PC-3 (cell line): ENCODE measurements at regions of chr1 and their contacts with region 1.

Region 1: DNA sequence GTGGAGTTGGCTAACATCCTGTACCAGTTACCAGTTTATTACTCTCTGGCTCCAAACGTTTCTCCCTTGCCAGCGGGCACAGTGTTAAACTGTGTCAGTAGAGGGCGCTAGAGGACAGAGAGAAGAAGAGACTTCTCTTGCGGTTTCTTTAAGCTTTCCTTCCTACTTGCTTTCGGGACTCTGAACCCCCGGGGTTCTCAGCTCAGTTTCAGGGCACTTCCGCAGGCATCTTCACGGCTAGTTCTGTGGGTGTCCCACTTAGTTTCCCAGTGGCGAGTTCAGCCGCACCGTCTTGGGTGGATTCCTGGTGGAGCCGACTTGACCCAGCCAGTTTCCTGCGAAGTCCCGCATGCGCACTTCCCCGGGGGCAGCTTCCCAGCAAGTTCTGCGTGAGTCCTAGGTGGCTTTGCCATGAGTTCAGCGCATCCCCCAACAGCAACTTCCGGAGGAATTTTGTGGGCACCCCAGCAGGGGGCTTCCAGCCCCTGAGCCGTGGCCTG is 37.9 kb upstream of the BTG2 start:
- DNase-seq: peak; percentile 98
- ATAC-seq: peak; percentile 79
- H3K4me3 ChIP-seq: peak overlapping the region; percentile 71
- H3K27ac ChIP-seq: no peak overlapping the region
- H3K4me1 ChIP-seq: peaks cover 7% of the 10 kb centered on the region; the same call in 1 of the 2 replicates
- H3K27me3 ChIP-seq: peaks cover 16% of the 10 kb centered on the region; the same call in 1 of the 2 replicates
- CTCF ChIP-seq: peak; percentile 96

Region 2: DNA sequence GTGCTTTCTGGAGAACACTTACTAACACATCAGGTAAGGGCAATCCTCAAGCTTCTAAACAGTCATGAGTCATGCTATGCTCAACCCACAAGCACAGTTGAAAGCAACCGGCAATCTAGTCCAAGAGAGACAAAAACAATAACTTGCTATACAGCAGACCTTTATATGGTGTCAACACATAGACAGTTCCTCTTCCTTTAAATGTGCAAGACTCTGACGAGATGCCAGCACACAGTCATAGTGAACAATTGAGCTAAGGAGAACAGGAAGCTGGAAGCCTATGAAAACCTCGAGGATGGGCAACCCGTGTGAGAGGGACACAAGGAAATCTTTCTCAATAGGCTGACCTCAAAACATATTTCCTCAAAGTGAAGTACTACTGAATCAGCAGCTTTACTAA is 314.6 kb before region 1 on chr1:
- CTCF ChIA-PET with region 1: no interaction called
- POLR2A ChIA-PET with region 1: interaction called, 10 read pairs
- intact Hi-C with region 1: no loop called
- DNase-seq: peak; percentile 80
- ATAC-seq: peak; percentile 73
- H3K4me3 ChIP-seq: no peak overlapping the region
- H3K27ac ChIP-seq: 0 out of 2 replicates have a peak overlapping the region, but pooled peaks have one; percentile 1
- H3K4me1 ChIP-seq: peaks cover 43% of the 10 kb centered on the region
- H3K27me3 ChIP-seq: no peaks in the 10 kb centered on the region
- CTCF ChIP-seq: no peak

Region 3: DNA sequence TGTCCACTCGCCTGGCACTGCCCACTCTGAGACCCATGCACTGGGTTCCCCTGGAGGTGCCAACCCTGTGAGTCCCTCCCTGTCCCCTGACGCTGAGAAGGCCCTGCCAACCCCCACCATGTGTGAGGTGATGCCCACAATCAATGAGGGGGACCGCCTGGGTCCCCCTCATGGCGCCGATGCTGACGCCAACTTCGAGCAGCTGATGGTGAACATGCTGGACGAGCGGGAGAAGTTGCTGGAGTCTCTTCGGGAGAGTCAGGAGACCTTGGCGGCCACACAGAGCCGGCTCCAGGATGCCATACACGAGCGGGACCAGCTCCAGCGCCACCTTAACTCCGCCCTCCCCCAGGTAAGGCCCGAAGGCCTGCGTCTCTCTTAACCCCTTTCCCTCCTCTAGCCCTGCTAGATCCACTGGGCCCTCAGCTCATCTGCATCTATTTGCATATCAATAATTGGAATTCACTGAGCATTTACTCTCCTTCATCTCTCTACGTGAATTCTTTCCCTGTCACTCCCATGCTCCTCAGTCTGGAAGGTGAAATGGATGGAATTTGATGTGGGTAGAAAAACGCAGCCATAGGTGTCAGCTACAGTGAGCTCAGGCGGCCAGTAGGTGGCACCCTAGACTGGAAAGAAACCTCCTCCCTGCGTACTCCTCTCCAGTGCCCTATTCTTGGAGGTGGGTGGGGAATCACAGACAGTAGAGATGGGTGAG is 228.3 kb before region 1 on chr1:
- CTCF ChIA-PET with region 1: interaction called, 3 read pairs
- POLR2A ChIA-PET with region 1: no interaction called
- intact Hi-C with region 1: loop called (anchors 2 kb)
- DNase-seq: peak; percentile 81
- ATAC-seq: peak; percentile 85
- H3K4me3 ChIP-seq: no peak overlapping the region
- H3K27ac ChIP-seq: no peak overlapping the region
- H3K4me1 ChIP-seq: peaks cover 11% of the 10 kb centered on the region; the same call in 1 of the 2 replicates
- H3K27me3 ChIP-seq: no peaks in the 10 kb centered on the region
- CTCF ChIP-seq: peak; percentile 98

Region 4: GRCh38 chr1:203117611-203118575 is 149.5 kb before region 1 on chr1:
- CTCF ChIA-PET with region 1: interaction called, 5 read pairs
- POLR2A ChIA-PET with region 1: no interaction called
- intact Hi-C with region 1: loop called (anchors 5 kb)
- DNase-seq: peak; percentile 70
- ATAC-seq: peak; percentile 98
- H3K4me3 ChIP-seq: no peak overlapping the region
- H3K27ac ChIP-seq: no peak overlapping the region
- H3K4me1 ChIP-seq: no peaks in the 10 kb centered on the region
- H3K27me3 ChIP-seq: peaks cover 54% of the 10 kb centered on the region
- CTCF ChIP-seq: peak; percentile 90

Region 5: GRCh38 chr1:203158423-203158822 is 109.0 kb before region 1 on chr1:
- CTCF ChIA-PET with region 1: no interaction called
- POLR2A ChIA-PET with region 1: no interaction called
- intact Hi-C with region 1: no loop called
- DNase-seq: no peak
- ATAC-seq: no peak
- H3K4me3 ChIP-seq: no peak overlapping the region
- H3K27ac ChIP-seq: no peak overlapping the region
- H3K4me1 ChIP-seq: peaks cover 25% of the 10 kb centered on the region
- H3K27me3 ChIP-seq: peaks cover 29% of the 10 kb centered on the region
- CTCF ChIP-seq: no peak

Region 6: GRCh38 chr1:203326830-203327683 is 59.7 kb after region 1 on chr1:
- CTCF ChIA-PET with region 1: interaction called, 10 read pairs
- POLR2A ChIA-PET with region 1: no interaction called
- intact Hi-C with region 1: no loop called
- DNase-seq: peak; percentile 94
- ATAC-seq: peak; percentile 94
- H3K4me3 ChIP-seq: peak overlapping the region; percentile 68
- H3K27ac ChIP-seq: peak overlapping the region; percentile 43
- H3K4me1 ChIP-seq: peaks cover 21% of the 10 kb centered on the region; the same call in 1 of the 2 replicates
- H3K27me3 ChIP-seq: peaks cover 19% of the 10 kb centered on the region; the same call in 1 of the 2 replicates
- CTCF ChIP-seq: no peak

Region 7: GRCh38 chr1:203428981-203429599 is 161.7 kb after region 1 on chr1:
- CTCF ChIA-PET with region 1: no interaction called
- POLR2A ChIA-PET with region 1: no interaction called
- intact Hi-C with region 1: no loop called
- DNase-seq: no peak
- ATAC-seq: no peak
- H3K4me3 ChIP-seq: no peak overlapping the region
- H3K27ac ChIP-seq: no peak overlapping the region
- H3K4me1 ChIP-seq: 0 out of 2 replicates have a peak, but pooled peaks cover 5% of the 10 kb centered on the region
- H3K27me3 ChIP-seq: peaks cover 78% of the 10 kb centered on the region
- CTCF ChIP-seq: no peak

Region 8: GRCh38 chr1:203440771-203441170 is 173.4 kb after region 1 on chr1:
- CTCF ChIA-PET with region 1: no interaction called
- POLR2A ChIA-PET with region 1: no interaction called
- intact Hi-C with region 1: loop called (anchors 5 kb)
- DNase-seq: peak; percentile 47
- ATAC-seq: peak; percentile 95
- H3K4me3 ChIP-seq: no peak overlapping the region
- H3K27ac ChIP-seq: no peak overlapping the region
- H3K4me1 ChIP-seq: no peaks in the 10 kb centered on the region
- H3K27me3 ChIP-seq: peaks cover 66% of the 10 kb centered on the region
- CTCF ChIP-seq: peak; percentile 60

Region 9: DNA sequence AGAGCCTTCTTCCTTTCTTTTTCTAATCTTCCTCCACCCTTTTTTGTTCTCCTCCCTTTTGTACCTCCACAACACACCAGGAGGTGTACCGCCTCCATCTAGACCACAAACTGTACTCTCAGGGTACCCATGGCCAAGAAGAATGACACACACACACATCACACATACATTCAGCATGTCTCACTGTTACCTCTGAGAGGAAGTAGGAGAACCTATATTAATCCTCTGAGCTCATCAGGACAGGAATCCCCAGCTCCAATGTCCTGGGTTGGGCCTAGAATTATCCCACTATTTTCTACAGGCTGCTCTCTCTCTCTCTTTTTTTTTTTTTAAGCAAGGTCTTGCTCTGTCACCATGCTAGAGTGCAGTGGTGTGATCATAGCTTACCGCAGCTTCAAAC is 395.9 kb after region 1 on chr1:
- CTCF ChIA-PET with region 1: interaction called, 10 read pairs
- POLR2A ChIA-PET with region 1: no interaction called
- intact Hi-C with region 1: no loop called
- DNase-seq: peak; percentile 99
- ATAC-seq: peak; percentile 98
- H3K4me3 ChIP-seq: peak overlapping the region; percentile 31; the same call in 1 of the 2 replicates
- H3K27ac ChIP-seq: peak overlapping the region; percentile 95
- H3K4me1 ChIP-seq: peaks cover 36% of the 10 kb centered on the region
- H3K27me3 ChIP-seq: no peaks in the 10 kb centered on the region
- CTCF ChIP-seq: 0 out of 2 replicates have a peak, but pooled peaks have one; percentile 29